SK-N-SH (cell line): ENCODE measurements at regions of chr1 and their contacts with region 1.

Region 1: GRCh38 chr1:114346480-114347029 is 164.4 kb downstream of the TRIM33 start:
- DNase-seq: peak; percentile 92
- H3K4me3 ChIP-seq: peak overlapping the region; percentile 52 to 62
- H3K27ac ChIP-seq: no peak overlapping the region
- H3K4me1 ChIP-seq: peaks cover 0 to 7% of the 10 kb centered on the region in 2 experiments; a peak in 1 of 4 replicates
- H3K27me3 ChIP-seq: 0 out of 2 replicates have a peak, but pooled peaks cover 5% of the 10 kb centered on the region
- CTCF ChIP-seq: peak; percentile 100
- EP300 ChIP-seq: no peak
- RAD21 ChIP-seq: peak; percentile 96

Region 2: GRCh38 chr1:113835642-113836307 is 510.8 kb before region 1 on chr1:
- CTCF ChIA-PET with region 1: no interaction called
- POLR2A ChIA-PET with region 1: no interaction called
- DNase-seq: peak; percentile 51
- H3K4me3 ChIP-seq: no peak overlapping the region; a peak in 1 of 4 replicates
- H3K27ac ChIP-seq: no peak overlapping the region
- H3K4me1 ChIP-seq: peaks cover 0 to 6% of the 10 kb centered on the region in 2 experiments; a peak in 1 of 4 replicates
- H3K27me3 ChIP-seq: no peaks in the 10 kb centered on the region
- CTCF ChIP-seq: peak; percentile 71
- EP300 ChIP-seq: no peak
- RAD21 ChIP-seq: peak; percentile 70

Region 3: DNA sequence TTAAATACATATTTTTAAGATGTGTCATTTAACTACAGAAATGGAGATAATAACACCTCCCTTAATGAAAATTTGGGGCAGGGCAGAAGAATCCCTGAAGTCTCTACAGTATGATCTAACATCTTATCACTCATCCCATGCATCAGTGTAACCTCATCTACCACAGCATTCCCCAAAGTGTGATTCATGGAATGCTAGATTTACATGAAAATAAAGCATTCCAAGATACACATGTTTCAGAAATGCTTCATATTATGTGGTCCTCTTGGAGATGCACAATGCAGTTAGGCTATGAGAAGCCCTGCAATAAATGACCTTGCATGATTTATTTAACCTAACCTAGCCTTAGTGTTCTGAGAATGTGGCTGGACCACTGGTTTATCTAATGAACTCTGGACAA is 26.0 kb before region 1 on chr1:
- CTCF ChIA-PET with region 1: interaction called, 21 read pairs
- POLR2A ChIA-PET with region 1: no interaction called
- DNase-seq: no peak
- H3K4me3 ChIP-seq: no peak overlapping the region
- H3K27ac ChIP-seq: peak overlapping the region in 1 of 2 experiments; percentile 72; a peak in 2 of 4 replicates
- H3K4me1 ChIP-seq: peaks cover 0 to 7% of the 10 kb centered on the region in 2 experiments; a peak in 2 of 4 replicates
- H3K27me3 ChIP-seq: no peaks in the 10 kb centered on the region
- CTCF ChIP-seq: no peak
- EP300 ChIP-seq: peak in 1 of 2 experiments; percentile 73; a peak in 1 of 4 replicates
- RAD21 ChIP-seq: no peak

Region 4: DNA sequence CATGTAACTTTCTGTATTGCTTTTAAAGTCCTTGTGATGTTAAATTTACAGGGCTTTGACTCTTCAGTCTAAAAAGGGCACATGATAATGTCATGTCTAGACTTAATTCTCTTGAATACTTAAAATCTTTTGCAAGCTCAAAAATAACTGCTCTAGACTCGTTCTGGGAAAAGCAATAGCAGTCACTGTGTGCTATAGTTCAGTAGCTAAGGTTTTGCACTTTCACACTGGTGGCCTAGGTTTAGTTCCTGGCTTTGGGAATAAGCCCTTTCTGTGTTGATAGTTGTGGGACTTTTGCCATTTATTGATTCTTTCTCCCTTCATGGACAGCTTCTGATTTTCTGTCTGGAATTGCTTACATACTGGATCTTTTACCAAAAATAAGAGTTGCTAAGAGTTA is 13.2 kb after region 1 on chr1:
- CTCF ChIA-PET with region 1: interaction called, 11 read pairs
- POLR2A ChIA-PET with region 1: no interaction called
- DNase-seq: no peak
- H3K4me3 ChIP-seq: no peak overlapping the region
- H3K27ac ChIP-seq: no peak overlapping the region
- H3K4me1 ChIP-seq: no peaks in the 10 kb centered on the region
- H3K27me3 ChIP-seq: no peaks in the 10 kb centered on the region; the same call in 1 of the 2 replicates
- CTCF ChIP-seq: no peak
- EP300 ChIP-seq: no peak
- RAD21 ChIP-seq: no peak

Region 5: DNA sequence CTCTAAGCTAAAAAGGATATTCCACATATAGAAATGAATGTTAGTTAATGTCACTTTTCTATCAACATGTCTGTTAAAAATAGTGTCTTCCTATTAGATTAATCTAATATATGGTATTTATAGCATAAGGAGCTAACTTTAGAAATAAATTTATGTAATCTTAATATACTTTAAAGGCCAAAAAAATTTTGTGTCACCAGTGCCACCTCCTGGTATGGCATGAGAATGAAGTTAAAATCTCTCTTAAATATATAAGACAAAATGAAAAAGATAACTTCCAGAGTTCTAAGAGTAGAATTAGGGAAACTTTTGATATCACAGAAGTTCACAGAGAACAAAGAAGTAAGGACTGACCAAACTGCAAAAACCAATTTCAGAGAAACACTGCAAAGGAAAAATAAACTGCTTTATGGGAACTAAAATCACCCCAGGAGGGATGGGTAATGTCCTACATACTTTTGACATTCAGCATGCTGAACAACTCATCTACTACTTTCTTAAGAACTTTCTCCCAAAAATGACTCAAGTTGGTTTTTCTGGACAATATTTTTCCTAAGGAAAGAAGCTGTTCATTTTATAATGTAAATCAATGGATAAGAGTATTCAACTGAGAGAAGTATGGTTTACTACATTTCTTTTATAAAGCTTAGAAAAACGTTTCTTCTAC is 81.7 kb after region 1 on chr1:
- CTCF ChIA-PET with region 1: interaction called, 21 read pairs
- POLR2A ChIA-PET with region 1: no interaction called
- DNase-seq: no peak
- H3K4me3 ChIP-seq: no peak overlapping the region
- H3K27ac ChIP-seq: no peak overlapping the region
- H3K4me1 ChIP-seq: peaks cover 0 to 9% of the 10 kb centered on the region in 2 experiments; a peak in 1 of 4 replicates
- H3K27me3 ChIP-seq: no peaks in the 10 kb centered on the region
- CTCF ChIP-seq: peak; percentile 74
- EP300 ChIP-seq: no peak
- RAD21 ChIP-seq: peak; percentile 30; the same call in 1 of the 2 replicates

Region 6: DNA sequence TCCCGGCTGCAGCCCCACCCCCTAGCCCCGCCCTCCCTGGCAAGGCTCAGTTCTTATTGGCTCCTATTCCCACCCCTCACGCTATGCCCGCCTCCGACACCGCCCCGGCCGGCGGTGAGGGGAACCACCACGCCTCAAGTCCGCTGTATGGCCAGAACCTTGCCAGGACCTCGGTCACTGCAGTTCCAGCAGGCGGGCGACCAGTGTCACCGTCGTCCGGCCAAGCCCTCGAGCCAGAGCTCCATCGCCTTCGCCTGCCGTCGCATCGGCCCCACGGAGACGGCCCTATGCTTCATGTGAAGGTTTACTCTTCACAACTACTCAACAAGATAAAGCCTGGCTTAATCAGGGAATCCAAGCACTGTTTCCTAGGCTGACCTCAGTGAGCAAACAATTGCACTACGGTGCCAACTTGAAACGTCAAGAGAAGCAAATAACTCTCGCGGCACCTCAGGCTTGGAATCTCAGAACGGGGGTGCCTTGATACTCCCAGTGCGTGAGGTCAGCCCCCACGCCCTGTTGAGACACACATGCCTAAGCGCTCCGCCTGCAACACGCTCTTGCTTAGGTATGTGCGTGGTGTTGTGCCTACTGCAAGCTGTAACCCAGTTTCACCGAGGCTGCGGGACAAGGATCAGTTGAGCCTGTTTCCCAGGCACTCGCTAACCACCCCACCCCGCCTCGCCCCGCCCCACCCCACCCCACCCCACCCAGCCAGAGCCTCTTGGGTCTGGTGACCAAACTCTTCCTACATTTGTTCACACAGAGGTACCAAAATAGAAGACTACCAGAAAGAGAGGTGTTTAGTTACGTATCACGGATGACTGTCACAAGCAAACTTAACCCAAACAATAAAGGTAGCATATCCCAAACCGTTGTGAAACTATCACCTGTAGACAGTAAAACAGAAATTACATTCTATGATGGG is 323.8 kb after region 1 on chr1:
- CTCF ChIA-PET with region 1: interaction called, 16 read pairs
- POLR2A ChIA-PET with region 1: no interaction called
- DNase-seq: peak; percentile 95
- H3K4me3 ChIP-seq: peak overlapping the region; percentile 58 to 80
- H3K27ac ChIP-seq: no peak overlapping the region
- H3K4me1 ChIP-seq: peaks cover 0 to 9% of the 10 kb centered on the region in 2 experiments; a peak in 1 of 4 replicates
- H3K27me3 ChIP-seq: peaks cover 8% of the 10 kb centered on the region; the same call in 1 of the 2 replicates
- CTCF ChIP-seq: no peak
- EP300 ChIP-seq: no peak
- RAD21 ChIP-seq: no peak